HCT116 (cell line): ENCODE measurements at regions of chr4 and their contacts with region 1.

Region 1: GRCh38 chr4:77862478-77863216 is at the start of gene MRPL1:
- DNase-seq: peak; percentile 95
- ATAC-seq: peak; percentile 88
- H3K4me3 ChIP-seq: peak within 1 kb of the TSS; percentile 76 to 97
- H3K27ac ChIP-seq: peak within 1 kb of the TSS; percentile 80
- H3K4me1 ChIP-seq: peaks cover 6 to 17% of the 10 kb centered on the region in 2 experiments; a peak in 3 of 4 replicates
- H3K27me3 ChIP-seq: no peaks in the 10 kb centered on the region
- CTCF ChIP-seq: 0 out of 6 replicates have a peak, but pooled peaks of 1 of the 3 experiments have one; percentile 3
- POLR2A ChIP-seq: peak; percentile 87
- RAD21 ChIP-seq: no peak
- total RNA-seq, gene MRPL1: 54.9 TPM

Region 2: GRCh38 chr4:77203380-77204197 is 659.1 kb before region 1 on chr4:
- CTCF ChIA-PET with region 1: no interaction called
- POLR2A ChIA-PET with region 1: no interaction called
- RAD21 ChIA-PET with region 1: no interaction called
- intact Hi-C with region 1: no loop called
- DNase-seq: peak; percentile 75
- ATAC-seq: peak; percentile 93
- H3K4me3 ChIP-seq: no peak overlapping the region
- H3K27ac ChIP-seq: no peak overlapping the region
- H3K4me1 ChIP-seq: peaks cover 0 to 12% of the 10 kb centered on the region in 2 experiments; a peak in 1 of 4 replicates
- H3K27me3 ChIP-seq: no peaks in the 10 kb centered on the region
- CTCF ChIP-seq: peak; percentile 76 to 84 (median 84)
- POLR2A ChIP-seq: no peak
- RAD21 ChIP-seq: peak; percentile 95

Region 3: DNA sequence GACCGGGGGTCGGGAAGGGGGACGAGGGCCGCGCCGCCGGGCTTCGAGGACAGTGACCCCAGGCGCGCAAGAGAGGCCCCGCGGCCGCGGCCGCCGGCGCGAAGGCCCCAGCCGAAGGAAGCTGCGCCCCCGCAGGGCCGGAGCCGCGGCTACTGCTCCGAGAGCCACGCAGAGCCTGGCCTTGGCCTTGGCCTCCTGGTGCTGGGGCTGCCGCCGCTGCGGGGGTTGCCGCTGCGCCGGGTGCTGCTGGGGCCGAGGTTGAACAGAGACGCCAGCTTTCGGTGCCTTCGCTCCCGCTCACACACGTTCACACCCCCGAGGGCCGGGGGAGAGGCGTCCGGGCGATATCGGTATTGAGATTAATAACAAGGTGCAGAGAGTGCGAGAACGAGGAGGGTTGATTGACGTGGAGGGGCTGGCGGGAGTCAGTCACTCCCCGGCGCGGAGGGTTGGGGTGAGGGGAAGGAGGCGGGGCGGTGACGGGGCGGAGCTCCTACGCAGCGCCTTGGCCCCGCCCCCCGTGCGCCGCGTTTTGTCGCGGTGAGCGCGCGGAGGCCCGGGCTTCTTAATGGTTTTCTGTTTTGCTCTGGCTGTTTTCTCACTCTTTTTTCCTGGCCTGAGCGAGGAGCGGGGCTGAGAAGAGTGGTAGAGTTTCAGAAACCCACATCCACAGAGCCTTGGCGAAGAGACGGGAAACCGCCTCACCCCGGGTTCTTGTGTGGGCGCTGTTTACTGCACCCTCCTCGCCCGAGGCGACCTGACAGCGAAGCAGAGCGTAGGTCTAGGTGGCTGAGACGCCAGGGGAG is 42.6 kb before region 1 on chr4:
- CTCF ChIA-PET with region 1: interaction called, 4 read pairs
- POLR2A ChIA-PET with region 1: interaction called, 8 read pairs
- RAD21 ChIA-PET with region 1: interaction called in 1 of 2 experiments, 3 read pairs
- intact Hi-C with region 1: loop called (anchors 1 kb)
- DNase-seq: peak; percentile 62
- ATAC-seq: peak; percentile 86
- H3K4me3 ChIP-seq: peak overlapping the region; percentile 89 to 94
- H3K27ac ChIP-seq: peak overlapping the region; percentile 93
- H3K4me1 ChIP-seq: peaks cover 12 to 17% of the 10 kb centered on the region in 2 experiments
- H3K27me3 ChIP-seq: no peaks in the 10 kb centered on the region
- CTCF ChIP-seq: no peak
- POLR2A ChIP-seq: peak; percentile 95
- RAD21 ChIP-seq: no peak